GM10248 (cell line): ENCODE measurements at regions of chr1 and their contacts with region 1.

Region 1: DNA sequence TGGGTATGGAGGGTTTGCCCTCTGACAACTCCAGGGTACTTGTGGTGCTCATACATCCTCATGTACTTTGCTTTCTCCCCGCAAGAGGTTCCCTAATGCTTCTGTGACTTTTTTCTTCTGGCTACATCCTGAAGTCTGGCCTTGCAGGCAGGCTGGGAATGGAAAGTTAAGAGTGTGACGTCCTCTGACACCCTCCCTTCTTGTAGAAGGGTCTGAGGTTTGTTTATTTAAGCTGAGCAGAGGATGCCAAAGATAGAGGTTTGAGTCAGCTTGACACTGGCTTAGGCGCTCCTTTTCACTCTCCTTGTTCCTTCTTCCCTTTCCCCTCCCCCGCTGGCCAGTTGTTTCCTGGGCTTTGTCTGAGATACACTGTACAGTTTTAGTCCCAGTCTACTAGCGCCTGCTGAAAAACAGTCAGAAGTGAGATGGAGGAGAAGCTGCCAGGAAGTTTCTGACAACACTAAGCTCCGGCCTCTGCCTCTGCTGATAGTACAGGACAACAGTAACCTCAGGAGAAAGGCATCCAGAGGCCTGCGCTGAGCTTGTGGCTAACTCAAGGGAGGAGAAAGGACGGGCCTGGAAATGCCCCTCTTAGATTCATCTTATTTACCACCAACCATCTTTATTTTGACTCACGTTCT is at the start of gene MACF1:
- DNase-seq: no peak
- CTCF ChIP-seq: no peak

Region 2: GRCh38 chr1:39142401-39143151 is 62.0 kb before region 1 on chr1:
- CTCF ChIA-PET with region 1: no interaction called
- POLR2A ChIA-PET with region 1: no interaction called
- DNase-seq: no peak
- CTCF ChIP-seq: no peak

Region 3: GRCh38 chr1:39183503-39184353 is 20.8 kb before region 1 on chr1:
- CTCF ChIA-PET with region 1: interaction called, 344 read pairs
- POLR2A ChIA-PET with region 1: no interaction called
- DNase-seq: no peak
- CTCF ChIP-seq: peak; percentile 29

Region 4: DNA sequence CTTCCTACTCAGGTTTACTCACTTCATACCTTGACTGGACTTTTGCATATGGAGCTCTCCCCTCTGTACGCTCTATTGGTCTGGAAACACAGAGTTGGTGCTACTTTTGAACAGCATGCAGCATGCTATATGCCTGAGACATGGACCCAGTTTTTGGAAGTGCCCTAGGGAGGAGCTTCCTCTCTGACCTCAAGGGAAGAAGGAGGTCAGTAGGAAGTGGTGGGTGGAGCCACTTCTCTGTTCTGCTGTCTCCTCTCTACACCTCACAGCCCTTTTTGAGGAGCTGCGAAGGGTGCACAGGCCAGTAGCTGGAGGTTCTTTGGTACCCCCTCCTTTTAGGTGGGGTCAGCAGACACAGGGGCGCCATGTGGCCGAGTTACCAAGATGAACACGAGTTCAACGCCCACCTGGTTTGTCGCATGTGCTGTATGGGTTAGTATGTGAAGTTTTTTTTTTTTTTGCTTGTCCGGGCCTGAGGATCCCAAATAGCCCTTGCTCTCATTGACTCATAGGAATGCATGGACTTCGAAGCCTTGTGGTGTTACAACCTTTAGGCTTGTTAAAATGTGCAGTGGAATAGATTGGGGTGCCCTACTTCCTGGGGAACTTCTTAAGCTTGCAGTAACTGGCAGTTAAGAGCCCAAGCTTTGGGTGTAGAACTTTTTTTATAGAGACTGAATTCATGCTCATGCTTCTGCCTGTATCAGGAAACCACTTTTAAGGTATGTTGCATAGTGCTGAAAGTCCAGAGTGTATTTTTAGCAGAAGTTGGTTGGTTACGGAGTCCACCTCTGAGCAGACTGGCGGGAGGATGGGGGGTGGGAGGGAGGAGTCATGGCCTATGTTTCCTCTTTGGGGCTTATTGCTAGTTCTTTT is 10.7 kb after region 1 on chr1:
- CTCF ChIA-PET with region 1: interaction called, 28 read pairs
- POLR2A ChIA-PET with region 1: interaction called, 5 read pairs
- DNase-seq: peak; percentile 78
- CTCF ChIP-seq: no peak

Region 5: GRCh38 chr1:39230261-39231190 is 26.0 kb after region 1 on chr1:
- CTCF ChIA-PET with region 1: no interaction called
- POLR2A ChIA-PET with region 1: no interaction called
- DNase-seq: peak; percentile 52
- CTCF ChIP-seq: no peak

Region 6: DNA sequence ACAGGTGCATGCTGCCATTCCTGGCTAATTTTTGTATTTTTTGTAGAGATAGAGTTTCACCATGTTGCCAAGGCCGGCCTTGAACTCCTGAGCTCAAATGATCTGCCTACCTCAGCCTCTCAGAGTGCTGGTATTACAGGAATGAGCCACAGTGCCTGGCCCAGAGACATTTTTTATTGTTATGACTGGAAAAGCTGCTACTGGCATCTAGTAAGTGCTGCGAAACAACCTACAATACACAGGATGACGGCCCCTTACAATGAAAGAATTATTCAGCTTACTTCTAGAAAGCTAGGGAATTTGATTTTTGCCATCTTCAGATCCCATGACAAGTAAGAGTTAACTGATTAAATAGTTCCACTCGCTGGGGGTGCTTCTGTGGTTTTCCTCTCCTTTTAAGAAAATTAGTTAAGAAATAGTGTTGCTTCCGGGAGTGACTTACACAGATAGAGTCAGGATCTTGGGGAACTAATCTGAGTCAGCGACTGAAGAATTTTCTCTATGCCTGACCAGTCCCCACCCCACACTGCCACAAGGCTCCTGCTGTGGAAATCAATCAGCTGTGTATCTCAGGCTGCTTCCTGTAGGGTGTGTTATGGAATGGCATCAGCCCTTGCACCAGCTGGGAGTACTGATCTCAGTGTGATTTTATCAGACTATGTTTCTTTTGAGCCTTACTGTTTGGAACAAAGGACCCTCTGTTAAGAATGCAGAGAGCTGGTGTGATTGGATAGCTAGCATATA is 193.9 kb after region 1 on chr1:
- CTCF ChIA-PET with region 1: no interaction called
- POLR2A ChIA-PET with region 1: no interaction called
- DNase-seq: no peak
- CTCF ChIP-seq: no peak